Panc1 (cell line): ENCODE measurements at regions of chr9 and their contacts with region 1.

Region 1: DNA sequence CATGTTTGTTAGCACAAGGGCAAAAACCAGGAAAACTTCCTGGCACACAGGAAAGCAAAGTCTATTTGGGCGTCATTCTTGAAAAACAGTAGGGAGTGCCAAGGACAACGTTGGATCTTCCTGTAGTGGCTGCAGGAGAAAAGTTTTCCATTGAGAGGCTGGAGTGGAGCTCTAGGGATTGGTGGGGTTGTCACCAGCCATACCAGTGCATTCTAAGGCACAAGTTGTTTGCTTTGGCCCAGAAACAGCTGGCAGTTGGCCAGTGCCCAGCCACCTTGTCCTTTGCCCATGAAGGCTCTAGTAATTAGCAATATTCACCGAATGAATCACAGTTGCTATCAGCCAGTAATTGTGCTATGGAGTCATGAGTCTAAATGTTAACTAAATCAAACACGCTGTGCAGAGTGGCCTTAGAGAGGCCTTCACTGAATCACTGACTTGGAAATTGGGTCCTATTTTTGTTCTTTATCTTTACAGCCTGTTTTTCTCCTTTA is 26.4 kb downstream of the TNFSF15 start:
- DNase-seq: peak; percentile 10
- ATAC-seq: peak; percentile 48
- H3K4me3 ChIP-seq: no peak overlapping the region
- H3K27ac ChIP-seq: no peak overlapping the region
- H3K4me1 ChIP-seq: no peaks in the 10 kb centered on the region
- H3K27me3 ChIP-seq: no peaks in the 10 kb centered on the region
- CTCF ChIP-seq: no peak

Region 2: DNA sequence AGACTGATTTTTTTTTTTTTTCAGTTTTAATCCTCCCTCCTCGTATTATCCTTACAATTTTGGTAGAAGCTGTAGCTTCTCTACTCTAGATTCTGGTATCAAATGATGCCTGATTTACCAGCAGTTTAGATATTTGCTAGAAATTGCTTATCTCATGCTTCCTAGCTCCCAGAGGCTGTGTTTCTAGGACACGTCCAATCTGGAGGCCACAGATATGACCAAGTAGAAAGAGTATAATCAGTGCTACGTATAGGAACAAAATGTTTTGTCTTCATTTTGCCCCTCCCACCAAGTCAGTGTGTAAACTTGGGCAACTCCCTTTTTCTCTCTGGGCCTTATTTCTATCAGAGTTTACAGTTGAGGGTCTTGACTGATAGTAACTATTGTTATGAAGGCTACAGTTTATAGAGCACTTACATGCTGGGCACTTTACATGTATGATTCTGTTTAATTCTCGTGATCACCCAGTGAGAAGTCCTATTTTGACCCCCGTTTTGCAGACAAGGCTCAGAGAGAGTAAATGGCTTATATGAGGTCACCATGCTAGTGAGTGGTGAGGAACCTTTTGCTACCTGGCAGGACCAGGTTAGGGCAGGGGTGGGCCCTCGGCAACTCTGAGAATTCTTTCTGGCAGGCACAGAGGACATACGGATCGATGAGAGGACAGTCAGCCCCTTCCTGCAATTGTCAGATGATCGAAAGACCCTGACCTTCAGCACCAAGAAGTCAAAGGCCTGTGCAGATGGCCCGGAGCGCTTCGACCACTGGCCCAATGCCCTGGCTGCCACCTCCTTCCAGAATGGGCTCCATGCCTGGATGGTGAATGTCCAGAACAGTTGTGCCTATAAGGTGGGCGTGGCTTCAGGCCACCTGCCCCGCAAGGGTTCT is 1410.2 kb before region 1 on chr9:
- CTCF ChIA-PET with region 1: no interaction called
- POLR2A ChIA-PET with region 1: no interaction called
- in situ Hi-C with region 1: no loop called
- intact Hi-C with region 1: no loop called
- DNase-seq: no peak
- ATAC-seq: no peak
- H3K4me3 ChIP-seq: no peak overlapping the region
- H3K27ac ChIP-seq: no peak overlapping the region
- H3K4me1 ChIP-seq: no peaks in the 10 kb centered on the region
- H3K27me3 ChIP-seq: no peaks in the 10 kb centered on the region
- CTCF ChIP-seq: no peak

Region 3: DNA sequence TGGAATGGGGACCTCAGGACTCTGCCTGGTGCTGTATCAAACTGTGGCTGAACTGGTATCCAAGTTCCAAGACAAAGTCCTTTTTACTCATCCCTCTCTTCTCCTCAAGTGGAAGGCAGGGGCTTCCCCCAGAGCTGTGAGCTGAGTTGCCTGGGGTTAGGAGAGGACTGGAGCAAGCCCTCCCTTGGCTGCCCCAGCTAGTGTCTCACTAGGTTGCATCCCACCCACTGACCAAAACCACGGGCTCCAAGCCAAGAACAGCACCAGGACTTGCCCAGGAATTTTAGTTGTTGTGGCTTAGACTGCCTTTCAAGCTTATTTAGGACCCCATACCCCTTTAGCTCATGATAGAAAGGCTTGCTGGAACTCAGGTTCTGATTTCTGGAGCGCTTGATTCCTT is 497.2 kb after region 1 on chr9:
- CTCF ChIA-PET with region 1: interaction called, 12 read pairs
- POLR2A ChIA-PET with region 1: no interaction called
- in situ Hi-C with region 1: no loop called
- intact Hi-C with region 1: no loop called
- DNase-seq: no peak
- ATAC-seq: no peak
- H3K4me3 ChIP-seq: no peak overlapping the region
- H3K27ac ChIP-seq: no peak overlapping the region
- H3K4me1 ChIP-seq: no peaks in the 10 kb centered on the region
- H3K27me3 ChIP-seq: no peaks in the 10 kb centered on the region
- CTCF ChIP-seq: no peak